ENCODE measurements at regions of chr2 and their contacts with region 1.

Region 1: GRCh38 chr2:161273038-161273760 is 35.0 kb upstream of the PSMD14 start:
- DNase-seq: peak; percentile 39 to 65 (median 58)
- H3K4me3 ChIP-seq: no peak overlapping the region
- H3K4me3 Mint-ChIP-seq: no peak overlapping the region
- H3K27ac ChIP-seq: no peak overlapping the region
- H3K27ac Mint-ChIP-seq: no peak overlapping the region
- H3K4me1 ChIP-seq: no peaks in the 10 kb centered on the region
- H3K4me1 Mint-ChIP-seq: peaks cover 0 to 4% (median 2%) of the 10 kb centered on the region in 4 donors
- H3K27me3 ChIP-seq: no peaks in the 10 kb centered on the region
- H3K27me3 Mint-ChIP-seq: peaks cover 1 to 4% of the 10 kb centered on the region in 2 donors

Region 2: GRCh38 chr2:160109936-160110673 is 1163.1 kb before region 1 on chr2:
- CTCF ChIA-PET with region 1: no interaction called
- POLR2A ChIA-PET with region 1: no interaction called
- intact Hi-C with region 1: loop called (anchors 10 kb)
- DNase-seq: peak; percentile 49 to 60 (median 55)
- H3K4me3 ChIP-seq: no peak overlapping the region
- H3K4me3 Mint-ChIP-seq: no peak overlapping the region
- H3K27ac ChIP-seq: no peak overlapping the region
- H3K27ac Mint-ChIP-seq: no peak overlapping the region
- H3K4me1 ChIP-seq: no peaks in the 10 kb centered on the region
- H3K4me1 Mint-ChIP-seq: no peaks in the 10 kb centered on the region
- H3K27me3 ChIP-seq: no peaks in the 10 kb centered on the region
- H3K27me3 Mint-ChIP-seq: peaks cover 11 to 16% of the 10 kb centered on the region in 2 donors

Region 3: DNA sequence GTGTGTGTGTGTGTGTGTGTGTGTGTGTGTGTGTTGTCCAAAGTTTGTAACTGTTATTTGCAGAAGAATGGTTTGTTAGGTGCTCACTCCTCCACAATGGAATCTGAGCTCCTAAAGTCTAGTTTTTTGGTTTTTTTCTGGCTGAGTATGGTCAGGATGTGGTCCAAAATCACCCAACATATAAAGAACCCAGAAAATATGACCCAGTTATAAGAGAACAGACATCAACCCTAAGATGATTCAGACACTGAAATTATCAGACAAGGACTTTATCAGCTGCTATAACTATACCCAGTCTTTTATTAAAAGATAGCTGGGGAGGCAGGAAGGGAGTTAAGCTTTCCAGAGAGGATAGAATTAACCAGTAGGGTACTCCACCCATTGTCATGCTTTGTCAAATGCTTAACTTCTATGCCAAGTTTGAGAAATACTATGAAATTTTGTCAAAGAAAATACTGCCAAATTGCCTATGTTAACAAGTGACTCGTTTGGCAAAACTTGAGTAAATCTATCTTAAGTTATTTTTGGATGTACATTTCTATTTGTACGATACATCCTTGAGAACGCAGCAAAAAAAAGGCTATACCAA is 55.5 kb before region 1 on chr2:
- CTCF ChIA-PET with region 1: interaction called, 103 read pairs
- POLR2A ChIA-PET with region 1: no interaction called
- intact Hi-C with region 1: no loop called
- DNase-seq: peak in 2 of 5 donors; percentile 10 to 35
- H3K4me3 ChIP-seq: no peak overlapping the region
- H3K4me3 Mint-ChIP-seq: peak overlapping the region in 3 of 8 donors; percentile 1 to 63 (median 2)
- H3K27ac ChIP-seq: no peak overlapping the region
- H3K27ac Mint-ChIP-seq: peak overlapping the region; percentile 50 to 87 (median 76)
- H3K4me1 ChIP-seq: peaks cover 31% of the 10 kb centered on the region
- H3K4me1 Mint-ChIP-seq: peaks cover 20 to 44% (median 33%) of the 10 kb centered on the region in 4 donors
- H3K27me3 ChIP-seq: no peaks in the 10 kb centered on the region
- H3K27me3 Mint-ChIP-seq: no peaks in the 10 kb centered on the region

Region 4: GRCh38 chr2:161250864-161251436 is 22.2 kb before region 1 on chr2:
- CTCF ChIA-PET with region 1: interaction called, 7 read pairs
- POLR2A ChIA-PET with region 1: no interaction called
- intact Hi-C with region 1: loop called (anchors 1 kb)
- DNase-seq: peak in 4 of 5 donors; percentile 11 to 50 (median 24)
- H3K4me3 ChIP-seq: no peak overlapping the region
- H3K4me3 Mint-ChIP-seq: no peak overlapping the region
- H3K27ac ChIP-seq: no peak overlapping the region
- H3K27ac Mint-ChIP-seq: peak overlapping the region in 2 of 7 donors; percentile 4 to 53
- H3K4me1 ChIP-seq: peaks cover 5% of the 10 kb centered on the region
- H3K4me1 Mint-ChIP-seq: peaks cover 10 to 28% (median 20%) of the 10 kb centered on the region in 4 donors
- H3K27me3 ChIP-seq: no peaks in the 10 kb centered on the region
- H3K27me3 Mint-ChIP-seq: no peaks in the 10 kb centered on the region

Region 5: DNA sequence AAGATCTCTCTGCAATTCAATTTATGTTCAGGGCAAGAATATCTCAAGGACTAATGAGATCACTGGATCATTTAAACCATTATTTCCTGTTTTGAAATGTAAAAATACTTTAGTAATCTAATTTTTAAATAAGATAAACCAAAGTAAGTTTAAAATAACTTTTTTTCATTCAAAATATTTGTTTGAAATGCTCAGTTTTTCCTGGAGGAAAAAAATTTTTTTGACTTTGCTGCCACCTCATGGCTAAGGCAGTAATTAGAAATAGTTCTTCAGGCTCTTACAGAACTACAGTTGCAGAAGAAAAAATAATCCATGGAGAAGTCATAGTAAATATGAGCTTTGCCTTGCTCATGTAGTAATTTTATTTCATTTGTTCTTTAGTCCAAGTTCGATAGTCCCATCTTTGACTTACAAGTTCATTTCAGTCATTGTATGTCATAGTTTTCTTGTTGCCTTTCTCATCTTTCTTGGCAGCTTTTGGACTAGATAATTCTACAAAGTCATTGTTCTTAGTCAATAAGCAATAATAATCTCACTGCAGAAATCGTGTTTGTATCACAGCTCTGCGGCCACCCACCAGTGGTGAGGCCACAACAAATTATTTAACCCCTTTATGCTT is 673.4 kb after region 1 on chr2:
- CTCF ChIA-PET with region 1: interaction called, 3 read pairs
- POLR2A ChIA-PET with region 1: no interaction called
- intact Hi-C with region 1: loop called (anchors 1 kb)
- DNase-seq: peak in 4 of 5 donors; percentile 15 to 31 (median 22)
- H3K4me3 ChIP-seq: no peak overlapping the region
- H3K4me3 Mint-ChIP-seq: no peak overlapping the region
- H3K27ac ChIP-seq: no peak overlapping the region
- H3K27ac Mint-ChIP-seq: no peak overlapping the region
- H3K4me1 ChIP-seq: peaks cover 12% of the 10 kb centered on the region
- H3K4me1 Mint-ChIP-seq: peaks cover 4 to 5% (median 5%) of the 10 kb centered on the region in 4 donors
- H3K27me3 ChIP-seq: peaks cover 3% of the 10 kb centered on the region
- H3K27me3 Mint-ChIP-seq: no peaks in the 10 kb centered on the region

Measured in CD4-positive, alpha-beta memory T cell (primary cell).